ENCODE measurements at regions of chr9 and their contacts with region 1.

Region 1: GRCh38 chr9:21812946-21813568 is 10.6 kb downstream of the MTAP start:
- DNase-seq: peak; percentile 59 to 75
- H3K4me3 ChIP-seq: no peak overlapping the region
- H3K4me3 Mint-ChIP-seq: no peak overlapping the region
- H3K27ac Mint-ChIP-seq: no peak overlapping the region
- H3K4me1 ChIP-seq: no peaks in the 10 kb centered on the region
- H3K4me1 Mint-ChIP-seq: no peaks in the 10 kb centered on the region
- H3K27me3 ChIP-seq: no peaks in the 10 kb centered on the region
- H3K27me3 Mint-ChIP-seq: no peaks in the 10 kb centered on the region
- CTCF ChIP-seq: peak; percentile 74 to 77

Region 2: GRCh38 chr9:21119093-21119770 is 693.8 kb before region 1 on chr9:
- CTCF ChIA-PET with region 1: no interaction called
- POLR2A ChIA-PET with region 1: no interaction called
- intact Hi-C with region 1: no loop called
- DNase-seq: no peak
- H3K4me3 ChIP-seq: no peak overlapping the region
- H3K4me3 Mint-ChIP-seq: no peak overlapping the region
- H3K27ac Mint-ChIP-seq: no peak overlapping the region
- H3K4me1 ChIP-seq: peaks cover 18% of the 10 kb centered on the region; the same call in 1 of the 2 replicates
- H3K4me1 Mint-ChIP-seq: peaks cover 18% of the 10 kb centered on the region
- H3K27me3 ChIP-seq: no peaks in the 10 kb centered on the region
- H3K27me3 Mint-ChIP-seq: no peaks in the 10 kb centered on the region
- CTCF ChIP-seq: no peak

Region 3: DNA sequence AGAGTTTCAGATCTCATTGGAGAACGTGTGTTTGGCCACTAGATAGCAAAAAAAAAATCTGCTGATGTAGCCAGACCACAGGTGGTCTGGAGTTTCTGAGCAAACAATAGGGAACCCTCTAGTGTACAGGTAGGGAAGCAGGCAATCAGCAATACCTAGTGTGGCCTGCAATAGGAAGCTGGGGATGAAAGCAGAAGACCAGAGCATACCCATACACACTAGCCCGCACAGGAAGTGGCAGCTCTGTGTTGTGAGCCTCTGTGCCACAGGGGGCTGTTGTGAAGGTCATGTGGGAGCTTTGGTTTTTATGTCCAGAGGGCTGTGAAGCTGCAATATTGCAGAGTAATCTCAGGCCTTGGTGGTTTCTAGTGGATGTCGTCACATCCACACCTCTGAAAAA is 70.6 kb after region 1 on chr9:
- CTCF ChIA-PET with region 1: no interaction called
- POLR2A ChIA-PET with region 1: no interaction called
- intact Hi-C with region 1: loop called (anchors 5 kb)
- DNase-seq: peak in 1 of 2 experiments; percentile 15
- H3K4me3 ChIP-seq: no peak overlapping the region
- H3K4me3 Mint-ChIP-seq: no peak overlapping the region
- H3K27ac Mint-ChIP-seq: no peak overlapping the region
- H3K4me1 ChIP-seq: no peaks in the 10 kb centered on the region
- H3K4me1 Mint-ChIP-seq: no peaks in the 10 kb centered on the region
- H3K27me3 ChIP-seq: no peaks in the 10 kb centered on the region
- H3K27me3 Mint-ChIP-seq: no peaks in the 10 kb centered on the region
- CTCF ChIP-seq: peak in 1 of 2 experiments; percentile 22

Region 4: DNA sequence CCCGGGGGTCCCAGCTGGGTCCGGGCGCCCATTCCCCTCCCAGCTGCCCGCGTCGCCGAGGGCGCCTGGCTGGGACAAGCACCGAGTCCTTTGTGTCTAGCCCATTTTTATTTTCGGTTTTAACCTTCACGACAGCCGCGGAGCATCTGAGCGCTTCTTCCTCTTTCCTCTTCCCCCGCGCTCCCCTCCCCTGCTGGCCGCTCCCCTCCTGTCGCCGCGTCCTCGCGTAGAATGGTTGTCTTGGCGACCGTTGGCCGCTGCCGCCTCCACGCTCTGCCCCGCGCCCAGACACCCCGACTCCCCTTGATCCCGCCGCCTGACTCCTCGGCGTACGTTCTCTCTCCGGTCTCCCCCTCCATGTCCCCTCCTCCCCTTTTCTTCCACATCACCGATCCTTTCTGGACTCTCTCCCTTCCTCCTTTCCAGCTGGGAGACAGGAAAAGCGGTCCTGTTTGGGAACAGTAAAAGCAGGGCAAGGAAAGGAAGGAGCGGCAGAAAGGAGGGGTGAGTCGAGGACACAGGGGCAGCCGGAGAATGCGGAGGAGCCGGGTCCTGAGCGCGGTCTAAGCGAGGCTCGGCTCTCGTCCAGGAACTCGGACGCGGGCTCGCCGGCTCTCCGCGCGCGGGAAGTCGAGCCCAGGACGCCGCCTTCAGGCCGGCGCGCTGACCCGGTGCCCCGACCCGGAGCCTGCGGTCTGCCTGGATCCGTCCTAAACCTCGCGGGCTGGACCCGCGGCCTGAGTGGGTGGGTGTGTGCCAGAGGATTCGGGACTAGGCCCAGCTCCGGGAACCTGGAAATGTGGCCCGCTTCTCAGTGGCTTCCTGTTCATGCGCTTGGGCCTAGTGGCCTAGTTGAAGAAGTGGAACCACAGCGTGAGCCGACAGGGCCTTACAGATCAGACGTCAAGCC is 182.4 kb after region 1 on chr9:
- CTCF ChIA-PET with region 1: interaction called, 3 read pairs
- POLR2A ChIA-PET with region 1: interaction called, 3 read pairs
- intact Hi-C with region 1: loop called (anchors 1 kb)
- DNase-seq: peak; percentile 75 to 77
- H3K4me3 ChIP-seq: peak overlapping the region; percentile 60
- H3K4me3 Mint-ChIP-seq: peak overlapping the region; percentile 86
- H3K27ac Mint-ChIP-seq: peak overlapping the region; percentile 90
- H3K4me1 ChIP-seq: peaks cover 3% of the 10 kb centered on the region; the same call in 1 of the 2 replicates
- H3K4me1 Mint-ChIP-seq: peaks cover 9% of the 10 kb centered on the region
- H3K27me3 ChIP-seq: no peaks in the 10 kb centered on the region
- H3K27me3 Mint-ChIP-seq: no peaks in the 10 kb centered on the region
- CTCF ChIP-seq: peak; percentile 16 to 23

Region 5: GRCh38 chr9:22037954-22038690 is 225.1 kb after region 1 on chr9:
- CTCF ChIA-PET with region 1: no interaction called
- POLR2A ChIA-PET with region 1: no interaction called
- intact Hi-C with region 1: loop called (anchors 1 kb)
- DNase-seq: no peak
- H3K4me3 ChIP-seq: no peak overlapping the region
- H3K4me3 Mint-ChIP-seq: no peak overlapping the region
- H3K27ac Mint-ChIP-seq: no peak overlapping the region
- H3K4me1 ChIP-seq: peaks cover 14% of the 10 kb centered on the region
- H3K4me1 Mint-ChIP-seq: no peaks in the 10 kb centered on the region
- H3K27me3 ChIP-seq: no peaks in the 10 kb centered on the region
- H3K27me3 Mint-ChIP-seq: no peaks in the 10 kb centered on the region
- CTCF ChIP-seq: peak; percentile 26 to 43

Region 6: DNA sequence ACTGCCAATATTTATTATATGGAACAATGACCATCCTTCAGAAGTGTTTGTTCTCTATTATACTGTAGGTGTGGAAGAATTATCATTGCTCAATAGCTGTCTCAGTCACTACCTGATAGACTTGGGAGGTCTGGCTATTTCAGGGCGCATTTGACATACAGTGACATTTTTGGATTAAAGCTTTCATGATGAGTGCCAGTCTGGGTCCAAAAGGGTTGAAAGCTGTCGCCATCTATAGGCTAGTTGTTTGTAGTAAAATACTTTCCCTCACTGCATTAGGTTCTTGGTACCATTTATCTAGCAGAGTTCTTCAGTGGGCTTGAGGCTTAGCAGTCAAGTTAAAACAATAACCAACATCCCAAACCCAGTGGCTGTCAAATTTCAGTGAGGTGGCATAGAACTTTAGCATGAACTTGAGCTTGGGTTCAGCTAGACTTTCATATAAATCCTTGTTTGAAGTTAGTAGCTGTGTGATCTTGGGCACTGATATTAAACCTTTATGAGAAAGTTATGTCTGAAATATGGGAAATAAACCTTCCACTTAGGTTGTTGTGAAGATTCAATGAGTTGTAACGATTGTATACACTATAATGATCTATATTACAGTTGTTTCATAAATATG is 306.6 kb after region 1 on chr9:
- CTCF ChIA-PET with region 1: interaction called, 8 read pairs
- POLR2A ChIA-PET with region 1: no interaction called
- intact Hi-C with region 1: loop called (anchors 1 kb)
- DNase-seq: peak in 1 of 2 experiments; percentile 24
- H3K4me3 ChIP-seq: no peak overlapping the region
- H3K4me3 Mint-ChIP-seq: no peak overlapping the region
- H3K27ac Mint-ChIP-seq: no peak overlapping the region
- H3K4me1 ChIP-seq: peaks cover 34% of the 10 kb centered on the region
- H3K4me1 Mint-ChIP-seq: peaks cover 24% of the 10 kb centered on the region
- H3K27me3 ChIP-seq: no peaks in the 10 kb centered on the region
- H3K27me3 Mint-ChIP-seq: no peaks in the 10 kb centered on the region
- CTCF ChIP-seq: peak in 1 of 2 experiments; percentile 29

Region 7: DNA sequence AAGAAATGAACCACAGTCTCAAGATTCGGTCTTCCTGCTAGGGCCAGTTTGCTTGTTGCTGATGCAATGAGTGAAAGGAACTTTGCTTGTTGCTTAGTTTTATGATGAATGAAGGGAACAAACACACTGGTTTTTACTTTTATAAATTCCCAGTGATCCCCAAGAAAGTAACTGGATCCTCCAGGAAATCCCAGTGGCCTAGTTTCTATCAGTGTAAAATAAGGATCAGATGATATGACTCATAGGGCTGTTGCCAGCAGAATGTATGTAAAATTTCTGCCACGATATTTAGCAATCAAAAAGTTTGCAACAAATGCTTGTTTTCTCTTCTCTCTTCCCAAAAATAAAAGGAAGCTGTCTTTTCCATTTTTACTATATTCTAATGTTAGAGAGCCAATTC is 356.2 kb after region 1 on chr9:
- CTCF ChIA-PET with region 1: no interaction called
- POLR2A ChIA-PET with region 1: no interaction called
- intact Hi-C with region 1: no loop called
- DNase-seq: no peak
- H3K4me3 ChIP-seq: no peak overlapping the region
- H3K4me3 Mint-ChIP-seq: no peak overlapping the region
- H3K27ac Mint-ChIP-seq: no peak overlapping the region
- H3K4me1 ChIP-seq: no peaks in the 10 kb centered on the region
- H3K4me1 Mint-ChIP-seq: no peaks in the 10 kb centered on the region
- H3K27me3 ChIP-seq: no peaks in the 10 kb centered on the region
- H3K27me3 Mint-ChIP-seq: peaks cover 3% of the 10 kb centered on the region
- CTCF ChIP-seq: no peak

Region 8: GRCh38 chr9:22244141-22245011 is 431.3 kb after region 1 on chr9:
- CTCF ChIA-PET with region 1: interaction called, 4 read pairs
- POLR2A ChIA-PET with region 1: no interaction called
- intact Hi-C with region 1: loop called (anchors 1 kb)
- DNase-seq: peak in 1 of 2 experiments; percentile 33
- H3K4me3 ChIP-seq: no peak overlapping the region
- H3K4me3 Mint-ChIP-seq: no peak overlapping the region
- H3K27ac Mint-ChIP-seq: no peak overlapping the region
- H3K4me1 ChIP-seq: no peaks in the 10 kb centered on the region
- H3K4me1 Mint-ChIP-seq: no peaks in the 10 kb centered on the region
- H3K27me3 ChIP-seq: no peaks in the 10 kb centered on the region
- H3K27me3 Mint-ChIP-seq: peaks cover 6% of the 10 kb centered on the region
- CTCF ChIP-seq: peak in 1 of 2 experiments; percentile 49